Caco-2 (cell line): ENCODE measurements at regions of chr6 and their contacts with region 1.

Region 1: GRCh38 chr6:116902629-116903028 is 25.6 kb downstream of the RFX6 start:
- DNase-seq: peak in 1 of 2 experiments; percentile 21
- H3K4me3 ChIP-seq: no peak overlapping the region
- H3K4me3 Mint-ChIP-seq: no peak overlapping the region
- H3K27ac Mint-ChIP-seq: no peak overlapping the region
- H3K4me1 ChIP-seq: peaks cover 10% of the 10 kb centered on the region
- H3K4me1 Mint-ChIP-seq: peaks cover 14% of the 10 kb centered on the region
- H3K27me3 ChIP-seq: no peaks in the 10 kb centered on the region
- H3K27me3 Mint-ChIP-seq: no peaks in the 10 kb centered on the region
- CTCF ChIP-seq: no peak

Region 2: GRCh38 chr6:116741571-116741970 is 161.1 kb before region 1 on chr6:
- CTCF ChIA-PET with region 1: no interaction called
- POLR2A ChIA-PET with region 1: no interaction called
- intact Hi-C with region 1: no loop called
- DNase-seq: no peak
- H3K4me3 ChIP-seq: no peak overlapping the region
- H3K4me3 Mint-ChIP-seq: no peak overlapping the region
- H3K27ac Mint-ChIP-seq: no peak overlapping the region
- H3K4me1 ChIP-seq: no peaks in the 10 kb centered on the region
- H3K4me1 Mint-ChIP-seq: no peaks in the 10 kb centered on the region
- H3K27me3 ChIP-seq: no peaks in the 10 kb centered on the region
- H3K27me3 Mint-ChIP-seq: peaks cover 3% of the 10 kb centered on the region
- CTCF ChIP-seq: no peak

Region 3: DNA sequence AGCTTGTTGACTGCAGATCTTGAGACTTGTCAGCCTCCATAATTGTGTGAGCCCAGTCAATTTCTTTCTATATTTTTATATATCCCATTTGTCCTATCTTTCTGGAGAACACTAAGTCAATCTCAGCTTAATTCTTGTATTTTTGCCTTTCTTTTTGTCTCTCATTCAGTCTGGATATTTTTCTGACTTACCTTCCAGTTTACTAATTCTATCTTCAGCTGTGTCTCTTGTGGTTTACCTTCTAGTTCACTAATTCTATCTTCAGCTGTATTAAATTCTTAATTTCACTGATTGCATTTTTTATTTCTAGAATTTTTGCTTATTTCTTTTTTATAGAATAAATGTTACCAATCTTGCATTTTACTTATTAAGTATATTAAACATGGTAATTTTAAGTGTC is 43.4 kb before region 1 on chr6:
- CTCF ChIA-PET with region 1: no interaction called
- POLR2A ChIA-PET with region 1: no interaction called
- intact Hi-C with region 1: no loop called
- DNase-seq: no peak
- H3K4me3 ChIP-seq: no peak overlapping the region
- H3K4me3 Mint-ChIP-seq: no peak overlapping the region
- H3K27ac Mint-ChIP-seq: no peak overlapping the region
- H3K4me1 ChIP-seq: no peaks in the 10 kb centered on the region
- H3K4me1 Mint-ChIP-seq: no peaks in the 10 kb centered on the region
- H3K27me3 ChIP-seq: no peaks in the 10 kb centered on the region
- H3K27me3 Mint-ChIP-seq: no peaks in the 10 kb centered on the region
- CTCF ChIP-seq: no peak

Region 4: DNA sequence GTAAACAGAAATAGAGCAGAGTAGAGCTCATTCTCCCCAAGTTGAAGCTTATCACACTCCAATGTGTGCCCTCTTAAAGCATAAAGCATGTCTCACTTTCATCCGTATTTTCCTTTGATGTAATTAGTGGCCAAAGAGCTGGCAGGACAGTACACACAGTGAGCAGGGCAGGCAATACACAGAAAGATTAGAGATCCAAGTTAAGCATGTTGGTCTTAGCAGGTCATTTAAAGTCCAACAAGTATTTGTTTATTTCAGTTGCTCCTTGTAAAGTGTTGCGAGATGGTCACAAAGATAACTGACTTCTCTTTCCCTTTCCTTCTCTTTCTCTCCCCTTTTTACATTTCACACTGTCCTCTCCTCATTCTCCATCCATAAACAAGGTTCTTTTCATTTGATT is 21.7 kb after region 1 on chr6:
- CTCF ChIA-PET with region 1: no interaction called
- POLR2A ChIA-PET with region 1: no interaction called
- intact Hi-C with region 1: loop called (anchors 1 kb)
- DNase-seq: peak; percentile 48 to 55
- H3K4me3 ChIP-seq: no peak overlapping the region
- H3K4me3 Mint-ChIP-seq: no peak overlapping the region
- H3K27ac Mint-ChIP-seq: no peak overlapping the region
- H3K4me1 ChIP-seq: peaks cover 25% of the 10 kb centered on the region
- H3K4me1 Mint-ChIP-seq: peaks cover 13% of the 10 kb centered on the region
- H3K27me3 ChIP-seq: no peaks in the 10 kb centered on the region
- H3K27me3 Mint-ChIP-seq: no peaks in the 10 kb centered on the region
- CTCF ChIP-seq: no peak